GM12878 (cell line): ENCODE measurements at regions of chr5 and their contacts with region 1.

Region 1: DNA sequence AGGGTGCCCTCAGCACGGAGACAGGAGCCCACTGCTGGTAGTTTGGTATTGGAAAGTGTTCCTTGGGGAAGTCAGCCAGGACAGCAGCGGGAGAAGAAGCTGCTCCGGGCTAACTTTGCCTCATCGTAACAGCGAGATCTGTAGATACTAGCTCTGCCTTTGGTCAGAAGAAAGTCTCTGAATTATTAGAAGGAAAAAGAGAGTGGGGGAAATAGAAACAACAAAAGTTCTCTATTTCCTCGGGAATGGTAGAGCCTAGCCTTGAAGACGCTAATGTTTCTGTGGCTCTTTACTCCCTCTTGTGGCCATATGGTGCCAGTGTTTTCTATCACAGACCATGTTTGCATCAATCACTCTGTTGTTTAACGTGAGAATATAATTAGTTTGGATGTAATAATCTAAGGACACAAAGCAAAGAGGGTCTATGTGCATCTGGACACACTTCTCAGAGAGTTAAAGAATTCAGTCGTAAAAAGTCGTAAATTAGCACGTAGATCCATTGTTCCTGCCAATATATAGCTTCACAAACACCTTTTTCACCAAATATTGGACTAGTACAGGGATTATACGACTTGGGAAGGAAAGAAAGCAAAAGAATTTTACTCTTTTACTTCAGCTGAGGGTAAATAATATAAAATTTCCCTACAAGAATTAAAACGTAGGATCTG is 40.2 kb upstream of the HSD17B4 start:
- DNase-seq: peak; percentile 65
- ATAC-seq: peak; percentile 78
- H3K4me3 ChIP-seq: peak overlapping the region; percentile 62
- H3K27ac ChIP-seq: peak overlapping the region; percentile 52
- H3K4me1 ChIP-seq: peaks cover 29% of the 10 kb centered on the region
- H3K27me3 ChIP-seq: no peaks in the 10 kb centered on the region
- CTCF ChIP-seq: peak; percentile 82 to 93 (median 88)
- EP300 ChIP-seq: no peak
- POLR2A ChIP-seq: no peak
- RAD21 ChIP-seq: peak; percentile 99

Region 2: GRCh38 chr5:118987988-118988865 is 423.8 kb before region 1 on chr5 and contains the start of gene DTWD2:
- CTCF ChIA-PET with region 1: interaction called, 112 read pairs
- POLR2A ChIA-PET with region 1: interaction called, 20 read pairs
- RAD21 ChIA-PET with region 1: interaction called, 80 read pairs
- SMC1A ChIA-PET with region 1: interaction called, 86 read pairs
- in situ Hi-C with region 1: loop called (anchors 5 kb)
- intact Hi-C with region 1: loop called (anchors 1 kb)
- DNase-seq: peak; percentile 81
- ATAC-seq: peak; percentile 96
- H3K4me3 ChIP-seq: peak within 1 kb of the TSS; percentile 74
- H3K27ac ChIP-seq: peak within 1 kb of the TSS; percentile 75
- H3K4me1 ChIP-seq: peaks cover 7% of the 10 kb centered on the region; the same call in 1 of the 2 replicates
- H3K27me3 ChIP-seq: no peaks in the 10 kb centered on the region
- CTCF ChIP-seq: peak; percentile 71 to 96 (median 92)
- EP300 ChIP-seq: 0 out of 4 replicates have a peak, but pooled peaks have one; percentile 8
- POLR2A ChIP-seq: peak; percentile 83
- RAD21 ChIP-seq: peak; percentile 86
- polyA plus RNA-seq, gene DTWD2: 0.93 to 1.0 TPM

Region 3: GRCh38 chr5:119079318-119079921 is 332.6 kb before region 1 on chr5:
- CTCF ChIA-PET with region 1: interaction called, 10 read pairs
- POLR2A ChIA-PET with region 1: no interaction called
- RAD21 ChIA-PET with region 1: interaction called, 9 read pairs
- SMC1A ChIA-PET with region 1: interaction called, 14 read pairs
- in situ Hi-C with region 1: loop called (anchors 5 kb)
- intact Hi-C with region 1: no loop called
- DNase-seq: no peak
- ATAC-seq: peak; percentile 55
- H3K4me3 ChIP-seq: peak overlapping the region; percentile 47; the same call in 1 of the 2 replicates
- H3K27ac ChIP-seq: peak overlapping the region; percentile 70
- H3K4me1 ChIP-seq: peaks cover 33% of the 10 kb centered on the region
- H3K27me3 ChIP-seq: no peaks in the 10 kb centered on the region
- CTCF ChIP-seq: no peak
- EP300 ChIP-seq: no peak
- POLR2A ChIP-seq: no peak
- RAD21 ChIP-seq: no peak

Region 4: DNA sequence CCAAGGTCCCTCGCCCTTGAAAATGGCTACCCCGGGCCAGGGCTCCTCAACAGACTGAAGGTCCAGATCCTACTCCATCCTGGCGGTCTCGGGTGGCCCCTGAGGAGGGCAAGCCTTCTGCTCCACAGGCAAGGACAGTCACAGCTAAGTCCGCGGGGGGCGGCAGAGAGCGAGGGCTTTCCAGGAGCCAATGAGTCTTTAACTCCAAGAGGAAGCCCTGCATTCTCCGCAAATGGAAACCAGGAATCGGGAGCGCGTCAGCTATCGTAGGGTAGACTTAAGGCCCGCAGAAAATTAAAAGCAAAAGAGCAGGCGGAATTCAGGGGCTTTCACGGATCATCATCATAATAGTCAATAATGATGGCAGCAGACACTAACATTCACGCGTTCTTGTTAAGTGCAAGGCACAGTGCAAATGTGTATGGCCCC is 144.1 kb before region 1 on chr5:
- CTCF ChIA-PET with region 1: interaction called, 30 read pairs
- POLR2A ChIA-PET with region 1: interaction called, 3 read pairs
- RAD21 ChIA-PET with region 1: interaction called, 42 read pairs
- SMC1A ChIA-PET with region 1: interaction called, 21 read pairs
- in situ Hi-C with region 1: no loop called
- intact Hi-C with region 1: loop called (anchors 2 kb)
- DNase-seq: peak; percentile 81
- ATAC-seq: peak; percentile 81
- H3K4me3 ChIP-seq: peak overlapping the region; percentile 99
- H3K27ac ChIP-seq: peak overlapping the region; percentile 90
- H3K4me1 ChIP-seq: peaks cover 13% of the 10 kb centered on the region
- H3K27me3 ChIP-seq: no peaks in the 10 kb centered on the region
- CTCF ChIP-seq: peak; percentile 63 to 80 (median 68)
- EP300 ChIP-seq: no peak
- POLR2A ChIP-seq: no peak
- RAD21 ChIP-seq: peak; percentile 46; the same call in 1 of the 2 replicates

Region 5: GRCh38 chr5:119322948-119323537 is 89.0 kb before region 1 on chr5:
- CTCF ChIA-PET with region 1: interaction called, 413 read pairs
- POLR2A ChIA-PET with region 1: interaction called, 5 read pairs
- RAD21 ChIA-PET with region 1: interaction called, 303 read pairs
- SMC1A ChIA-PET with region 1: interaction called, 583 read pairs
- in situ Hi-C with region 1: no loop called
- intact Hi-C with region 1: no loop called
- DNase-seq: no peak
- ATAC-seq: peak; percentile 64
- H3K4me3 ChIP-seq: peak overlapping the region; percentile 26; the same call in 1 of the 2 replicates
- H3K27ac ChIP-seq: peak overlapping the region; percentile 87
- H3K4me1 ChIP-seq: peaks cover 52% of the 10 kb centered on the region
- H3K27me3 ChIP-seq: no peaks in the 10 kb centered on the region
- CTCF ChIP-seq: no peak
- EP300 ChIP-seq: no peak
- POLR2A ChIP-seq: no peak
- RAD21 ChIP-seq: no peak

Region 6: DNA sequence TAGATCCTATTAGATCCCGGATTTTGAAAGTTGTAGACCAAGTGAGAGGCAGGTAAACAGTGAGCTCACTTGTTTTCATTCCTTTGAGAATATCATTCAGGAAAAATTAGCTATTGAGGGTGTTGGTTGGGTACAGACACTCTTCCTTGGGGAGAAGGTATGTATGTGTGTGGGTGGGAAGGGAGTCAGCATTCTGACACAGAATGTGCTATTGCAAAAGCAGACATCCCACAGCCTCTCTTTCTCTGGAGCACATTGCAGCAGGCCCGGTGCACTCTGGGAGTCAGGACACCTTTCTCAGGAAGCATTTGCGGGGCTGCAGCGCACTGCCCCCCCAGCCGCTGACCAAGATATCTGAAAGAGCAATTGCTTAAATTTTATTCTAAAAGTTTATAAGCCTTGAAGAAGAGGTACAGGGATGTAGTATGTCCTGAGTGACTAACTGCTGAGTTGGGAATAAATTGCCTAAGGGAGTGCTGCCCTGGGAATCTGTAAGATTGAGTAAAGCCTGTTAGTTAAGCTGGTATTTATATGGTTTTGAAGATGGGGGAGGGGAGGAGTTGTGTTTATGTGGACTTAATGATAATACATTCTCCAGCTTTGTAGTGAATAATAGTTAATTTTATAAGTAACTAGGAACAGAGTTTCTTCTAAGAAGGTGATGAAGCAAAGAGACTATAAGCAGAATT is 51.0 kb before region 1 on chr5:
- CTCF ChIA-PET with region 1: interaction called, 167 read pairs
- POLR2A ChIA-PET with region 1: interaction called, 8 read pairs
- RAD21 ChIA-PET with region 1: interaction called, 24 read pairs
- SMC1A ChIA-PET with region 1: interaction called, 214 read pairs
- in situ Hi-C with region 1: no loop called
- intact Hi-C with region 1: no loop called
- DNase-seq: no peak
- ATAC-seq: no peak
- H3K4me3 ChIP-seq: peak overlapping the region; percentile 96
- H3K27ac ChIP-seq: peak overlapping the region; percentile 3; the same call in 1 of the 2 replicates
- H3K4me1 ChIP-seq: peaks cover 50% of the 10 kb centered on the region
- H3K27me3 ChIP-seq: no peaks in the 10 kb centered on the region
- CTCF ChIP-seq: no peak
- EP300 ChIP-seq: no peak
- POLR2A ChIP-seq: no peak
- RAD21 ChIP-seq: no peak

Region 7: DNA sequence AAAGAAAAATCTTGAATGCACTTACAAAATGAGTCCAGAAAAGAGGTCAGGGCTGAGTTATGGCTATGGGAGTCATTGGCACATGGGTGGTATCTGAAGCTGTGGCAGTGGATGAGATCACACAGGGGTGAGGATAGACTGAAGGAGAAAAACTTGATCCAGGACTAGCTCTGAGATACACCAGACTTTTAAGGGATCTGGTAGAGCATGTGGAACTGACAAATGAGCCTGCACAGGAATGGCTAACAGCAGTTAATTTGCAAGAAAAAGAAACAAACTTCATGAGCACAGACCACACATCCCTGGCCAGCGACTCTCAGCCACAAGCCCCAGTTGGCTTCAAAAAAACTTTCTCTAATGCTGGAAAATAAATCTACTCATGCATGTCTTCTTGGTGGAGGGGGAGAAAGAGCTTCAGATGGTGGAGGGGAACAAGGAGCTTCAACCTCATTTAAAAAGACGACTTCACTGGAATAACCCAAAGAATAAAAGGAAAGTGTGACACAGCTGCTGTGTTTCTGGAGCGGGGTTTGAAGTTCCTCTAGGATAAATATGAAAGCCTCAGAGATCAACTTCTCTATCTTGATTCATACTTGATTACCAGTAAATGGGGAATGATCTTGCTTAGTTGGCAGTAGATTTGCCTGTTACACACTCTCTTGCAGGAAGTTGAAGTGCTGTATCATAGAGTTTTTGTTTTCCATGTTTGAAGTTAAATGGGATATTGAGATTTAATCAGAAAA is 22.6 kb before region 1 on chr5:
- CTCF ChIA-PET with region 1: interaction called, 49 read pairs
- POLR2A ChIA-PET with region 1: interaction called, 7 read pairs
- RAD21 ChIA-PET with region 1: interaction called, 17 read pairs
- SMC1A ChIA-PET with region 1: interaction called, 9 read pairs
- in situ Hi-C with region 1: no loop called
- intact Hi-C with region 1: no loop called
- DNase-seq: no peak
- ATAC-seq: peak; percentile 42
- H3K4me3 ChIP-seq: peak overlapping the region; percentile 48; the same call in 1 of the 2 replicates
- H3K27ac ChIP-seq: peak overlapping the region; percentile 29
- H3K4me1 ChIP-seq: peaks cover 61% of the 10 kb centered on the region
- H3K27me3 ChIP-seq: no peaks in the 10 kb centered on the region
- CTCF ChIP-seq: no peak
- EP300 ChIP-seq: no peak
- POLR2A ChIP-seq: no peak
- RAD21 ChIP-seq: no peak

Region 8: DNA sequence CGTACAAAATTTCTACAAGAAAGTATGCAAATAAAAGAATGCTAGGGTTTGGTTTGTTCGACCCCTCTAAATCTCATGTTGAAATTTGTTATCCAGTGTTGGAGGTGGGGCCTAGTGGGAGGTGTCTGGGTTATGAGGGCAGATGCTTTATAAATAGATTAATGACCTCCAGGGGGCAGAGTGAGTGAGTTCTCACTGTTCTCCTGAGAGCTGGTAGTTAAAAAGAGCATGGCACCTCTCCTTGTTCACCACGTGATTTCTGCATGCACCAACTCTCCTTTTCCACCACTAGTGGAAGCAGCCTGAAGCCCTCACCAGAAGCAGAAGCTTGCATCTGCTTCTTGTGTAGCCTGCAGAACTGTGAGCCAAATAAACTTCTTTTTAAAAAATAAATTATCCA is 166.9 kb after region 1 on chr5:
- CTCF ChIA-PET with region 1: no interaction called
- POLR2A ChIA-PET with region 1: no interaction called
- RAD21 ChIA-PET with region 1: no interaction called
- SMC1A ChIA-PET with region 1: no interaction called
- in situ Hi-C with region 1: no loop called
- intact Hi-C with region 1: no loop called
- DNase-seq: no peak
- ATAC-seq: peak; percentile 98
- H3K4me3 ChIP-seq: no peak overlapping the region
- H3K27ac ChIP-seq: no peak overlapping the region
- H3K4me1 ChIP-seq: no peaks in the 10 kb centered on the region
- H3K27me3 ChIP-seq: no peaks in the 10 kb centered on the region
- CTCF ChIP-seq: peak; percentile 21 to 36 (median 27); a peak in 3 of 6 replicates
- EP300 ChIP-seq: no peak
- POLR2A ChIP-seq: no peak
- RAD21 ChIP-seq: peak; percentile 22; the same call in 1 of the 2 replicates